Activated CD4-positive, alpha-beta memory T cell treated with anti-CD3 and anti-CD28 coated beads, Interleukin-2, amount 10 ng/mL, durations not matched to agents 7 days and 5 days (primary cell): ENCODE measurements at regions of chr3 and their contacts with region 1.

Region 1: DNA sequence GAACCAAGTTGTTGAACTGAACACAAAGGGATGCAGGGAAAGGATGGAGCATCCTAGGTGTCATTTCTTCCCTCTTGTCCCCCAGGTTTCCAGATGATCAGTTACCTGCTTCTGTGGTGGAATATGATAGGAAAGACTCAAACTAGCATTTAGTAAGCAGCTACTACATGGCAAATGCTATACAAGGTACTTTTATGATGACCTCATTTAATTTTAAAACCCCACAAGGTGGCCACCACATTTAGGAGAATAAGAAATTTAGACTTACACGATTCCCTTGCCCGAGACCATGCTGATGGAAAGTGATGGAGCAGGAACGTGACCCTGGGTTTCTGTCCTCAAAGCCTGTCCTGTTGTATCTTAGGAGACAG is 40.9 kb downstream of the CCR4 start:
- DNase-seq: no peak
- H3K4me3 Mint-ChIP-seq: peak overlapping the region; percentile 23
- H3K27ac Mint-ChIP-seq: peak overlapping the region; percentile 92
- H3K4me1 Mint-ChIP-seq: peaks cover 89% of the 10 kb centered on the region
- H3K27me3 Mint-ChIP-seq: no peaks in the 10 kb centered on the region

Region 2: DNA sequence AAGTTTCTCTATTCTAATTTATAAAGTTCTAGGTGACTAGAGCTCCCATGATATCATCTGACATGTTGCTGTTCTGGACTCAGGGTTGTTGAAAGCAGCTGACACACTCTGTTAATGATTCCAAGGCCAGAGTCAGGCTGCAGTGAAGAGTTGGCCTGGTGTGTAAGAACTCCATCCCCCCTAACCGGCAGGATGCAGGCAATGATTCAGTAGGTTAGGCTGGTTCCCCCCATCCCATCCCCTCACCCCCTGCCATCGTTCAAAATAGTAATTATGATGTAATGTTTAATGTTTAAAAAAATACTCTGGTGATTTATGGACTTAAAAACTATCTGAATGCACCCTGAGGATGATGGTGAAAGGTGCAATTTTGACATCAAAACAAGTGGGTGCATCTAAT is 179.1 kb before region 1 on chr3:
- CTCF ChIA-PET with region 1: no interaction called
- POLR2A ChIA-PET with region 1: no interaction called
- DNase-seq: no peak
- H3K4me3 Mint-ChIP-seq: no peak overlapping the region
- H3K27ac Mint-ChIP-seq: no peak overlapping the region
- H3K4me1 Mint-ChIP-seq: peaks cover 24% of the 10 kb centered on the region
- H3K27me3 Mint-ChIP-seq: peaks cover 41% of the 10 kb centered on the region

Region 3: DNA sequence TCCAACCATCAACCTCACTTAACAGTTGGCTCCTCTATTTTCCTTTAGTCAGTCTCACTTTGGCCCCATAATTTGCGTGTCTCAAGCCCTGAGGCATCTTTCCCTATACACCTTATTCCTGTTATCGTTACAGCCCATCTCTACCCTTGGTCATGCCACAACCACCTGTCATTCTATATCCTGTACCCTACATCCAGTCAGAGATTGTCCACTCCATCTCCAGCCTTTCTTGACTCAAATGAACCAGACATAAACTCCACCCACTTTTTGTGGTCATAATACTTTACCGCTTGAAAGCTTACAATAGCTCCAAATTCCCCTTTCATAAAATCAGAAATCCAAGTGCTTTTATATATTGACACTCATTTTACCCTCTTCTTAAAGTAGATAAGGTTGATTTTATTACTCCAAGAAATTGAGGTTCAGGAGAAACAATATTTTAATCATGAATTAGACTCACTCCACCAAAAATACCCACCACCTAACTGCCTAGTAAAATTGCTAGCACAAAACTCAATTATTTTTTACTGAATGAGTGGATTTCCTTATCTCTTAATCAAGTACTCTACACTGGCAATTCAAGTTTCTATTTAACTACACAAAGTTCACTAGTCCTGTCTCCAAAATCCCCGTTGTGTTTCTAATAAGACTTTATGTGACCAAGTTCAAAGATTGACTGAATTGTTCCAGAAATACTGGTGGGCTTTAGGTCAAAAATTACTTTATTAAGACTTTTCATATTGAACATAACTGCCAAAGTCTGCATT is 31.7 kb before region 1 on chr3:
- CTCF ChIA-PET with region 1: interaction called, 3 read pairs
- POLR2A ChIA-PET with region 1: interaction called, 14 read pairs
- DNase-seq: no peak
- H3K4me3 Mint-ChIP-seq: peak overlapping the region; percentile 27
- H3K27ac Mint-ChIP-seq: peak overlapping the region; percentile 77
- H3K4me1 Mint-ChIP-seq: peaks cover 66% of the 10 kb centered on the region
- H3K27me3 Mint-ChIP-seq: no peaks in the 10 kb centered on the region

Region 4: DNA sequence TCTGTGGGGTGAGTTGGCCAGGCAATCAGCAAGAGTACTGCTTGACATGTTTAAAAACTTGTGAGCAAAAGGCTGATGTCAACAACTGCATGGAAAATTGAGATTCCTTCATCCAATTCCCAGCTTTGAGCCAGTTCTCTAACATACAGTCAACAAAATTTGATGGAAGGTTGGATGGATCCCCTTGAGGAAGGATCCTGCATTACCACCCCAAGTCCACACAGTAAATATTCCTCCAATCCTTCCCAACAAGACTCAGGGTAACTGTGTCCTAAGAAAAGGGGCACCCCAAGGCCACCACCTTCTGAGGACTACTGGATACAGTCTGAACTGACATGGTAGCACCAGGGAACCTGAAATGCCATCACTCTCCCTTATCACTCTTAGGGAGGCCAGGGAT is 89.5 kb after region 1 on chr3:
- CTCF ChIA-PET with region 1: no interaction called
- POLR2A ChIA-PET with region 1: no interaction called
- DNase-seq: no peak
- H3K4me3 Mint-ChIP-seq: no peak overlapping the region
- H3K27ac Mint-ChIP-seq: no peak overlapping the region
- H3K4me1 Mint-ChIP-seq: peaks cover 11% of the 10 kb centered on the region
- H3K27me3 Mint-ChIP-seq: no peaks in the 10 kb centered on the region

Region 5: GRCh38 chr3:33105341-33105948 is 113.1 kb after region 1 on chr3:
- CTCF ChIA-PET with region 1: no interaction called
- POLR2A ChIA-PET with region 1: no interaction called
- DNase-seq: no peak
- H3K4me3 Mint-ChIP-seq: no peak overlapping the region
- H3K27ac Mint-ChIP-seq: no peak overlapping the region
- H3K4me1 Mint-ChIP-seq: no peaks in the 10 kb centered on the region
- H3K27me3 Mint-ChIP-seq: peaks cover 4% of the 10 kb centered on the region

Region 6: GRCh38 chr3:33403756-33404155 is 411.4 kb after region 1 on chr3:
- CTCF ChIA-PET with region 1: no interaction called
- POLR2A ChIA-PET with region 1: no interaction called
- DNase-seq: no peak
- H3K4me3 Mint-ChIP-seq: no peak overlapping the region
- H3K27ac Mint-ChIP-seq: no peak overlapping the region
- H3K4me1 Mint-ChIP-seq: no peaks in the 10 kb centered on the region
- H3K27me3 Mint-ChIP-seq: no peaks in the 10 kb centered on the region